SK-N-SH (cell line): ENCODE measurements at regions of chr1 and their contacts with region 1.

Region 1: DNA sequence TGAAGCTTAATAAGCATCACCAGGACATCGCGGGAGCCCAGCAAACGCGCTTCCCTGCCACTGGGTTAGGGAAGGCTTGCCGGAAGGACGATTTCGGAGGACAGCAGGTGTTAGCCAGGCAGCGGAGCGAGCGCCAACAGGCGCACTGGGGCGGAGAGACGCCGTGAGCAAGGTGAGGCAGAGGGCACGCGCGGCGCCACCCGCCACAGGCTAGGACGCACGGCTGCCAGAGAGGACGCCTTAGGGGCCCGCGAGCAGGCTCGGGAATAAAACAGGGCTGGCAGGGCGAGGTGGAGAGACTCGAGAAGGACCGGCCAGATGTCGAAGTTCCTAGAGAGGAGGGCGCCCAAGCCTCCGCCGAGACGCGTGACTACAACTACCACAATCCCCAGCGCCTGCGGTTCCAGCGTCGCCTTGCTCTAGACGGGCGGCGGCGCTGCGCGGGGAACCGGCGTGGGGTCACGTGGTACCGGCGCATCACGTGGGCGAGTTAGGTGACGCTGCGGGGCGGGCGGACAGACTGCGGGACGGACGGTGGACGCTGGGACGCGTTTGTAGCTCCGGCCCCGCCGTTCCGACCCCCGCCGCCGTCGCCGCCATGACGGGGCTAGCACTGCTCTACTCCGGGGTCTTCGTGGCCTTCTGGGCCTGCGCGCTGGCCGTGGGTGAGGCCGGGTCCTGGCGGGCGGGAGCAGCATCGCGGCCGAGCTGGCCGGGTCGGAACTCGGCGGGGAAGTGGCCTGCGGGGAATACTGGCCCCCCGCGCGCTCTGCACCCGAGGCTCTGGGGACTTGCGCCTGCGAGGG is at the start of gene ATP6V0B:
- DNase-seq: peak; percentile 96
- H3K4me3 ChIP-seq: peak within 1 kb of the TSS; percentile 83 to 91
- H3K27ac ChIP-seq: peak within 1 kb of the TSS; percentile 66 to 93; a peak in 3 of 4 replicates
- H3K4me1 ChIP-seq: peaks cover 8 to 47% of the 10 kb centered on the region in 2 experiments; a peak in 1 of 4 replicates
- H3K27me3 ChIP-seq: no peaks in the 10 kb centered on the region
- CTCF ChIP-seq: no peak
- EP300 ChIP-seq: no peak
- RAD21 ChIP-seq: no peak
- polyA plus RNA-seq, gene ATP6V0B: 180 and 191 TPM in 2 replicates

Region 2: GRCh38 chr1:43946236-43947060 is 28.2 kb before region 1 on chr1 and contains the start of gene IPO13:
- CTCF ChIA-PET with region 1: interaction called, 10 read pairs
- POLR2A ChIA-PET with region 1: interaction called, 3 read pairs
- DNase-seq: peak; percentile 98
- H3K4me3 ChIP-seq: peak within 1 kb of the TSS; percentile 79 to 93
- H3K27ac ChIP-seq: peak within 1 kb of the TSS; percentile 82 to 97
- H3K4me1 ChIP-seq: peaks cover 12 to 24% of the 10 kb centered on the region in 2 experiments
- H3K27me3 ChIP-seq: no peaks in the 10 kb centered on the region
- CTCF ChIP-seq: peak; percentile 68
- EP300 ChIP-seq: no peak
- RAD21 ChIP-seq: peak; percentile 59
- polyA plus RNA-seq, gene IPO13: 15.5 and 16.7 TPM in 2 replicates

Region 3: DNA sequence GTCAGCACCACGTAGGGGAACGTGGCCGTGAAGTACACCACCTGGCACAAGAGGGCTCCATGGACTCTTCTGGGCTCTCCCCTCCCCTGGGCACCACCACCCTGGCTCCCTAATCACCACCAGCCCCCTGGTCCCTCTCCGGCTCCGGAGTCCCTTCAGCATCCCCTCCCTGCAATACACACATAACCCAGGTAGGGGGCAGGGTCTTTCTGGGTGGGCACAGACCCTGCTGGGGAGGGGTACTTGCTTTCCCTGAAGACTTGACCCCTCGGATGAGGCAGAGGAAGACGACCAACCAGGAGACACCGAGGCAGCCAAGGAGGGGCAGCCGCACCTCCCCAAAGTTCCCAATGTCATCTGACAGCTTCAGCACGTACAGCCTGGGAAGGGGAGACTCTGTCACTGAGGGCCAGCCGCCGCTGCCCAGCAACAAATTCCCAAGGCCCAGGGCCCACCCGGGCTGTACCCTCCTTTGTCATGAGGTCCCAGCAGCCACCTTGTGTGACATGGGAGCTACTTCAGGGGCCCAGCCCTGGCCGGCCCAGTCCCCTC is 28.0 kb after region 1 on chr1:
- CTCF ChIA-PET with region 1: interaction called, 10 read pairs
- POLR2A ChIA-PET with region 1: interaction called, 3 read pairs
- DNase-seq: peak; percentile 59
- H3K4me3 ChIP-seq: no peak overlapping the region
- H3K27ac ChIP-seq: no peak overlapping the region
- H3K4me1 ChIP-seq: peaks cover 0 to 31% of the 10 kb centered on the region in 2 experiments; a peak in 2 of 4 replicates
- H3K27me3 ChIP-seq: no peaks in the 10 kb centered on the region
- CTCF ChIP-seq: peak; percentile 30
- EP300 ChIP-seq: no peak
- RAD21 ChIP-seq: no peak

Region 4: GRCh38 chr1:44036409-44037139 is 61.9 kb after region 1 on chr1:
- CTCF ChIA-PET with region 1: interaction called, 15 read pairs
- POLR2A ChIA-PET with region 1: no interaction called
- DNase-seq: peak; percentile 79
- H3K4me3 ChIP-seq: no peak overlapping the region; a peak in 1 of 4 replicates
- H3K27ac ChIP-seq: peak overlapping the region in 1 of 2 experiments; percentile 74; a peak in 2 of 4 replicates
- H3K4me1 ChIP-seq: peaks cover 14 to 35% of the 10 kb centered on the region in 2 experiments; a peak in 3 of 4 replicates
- H3K27me3 ChIP-seq: no peaks in the 10 kb centered on the region
- CTCF ChIP-seq: peak; percentile 85
- EP300 ChIP-seq: no peak
- RAD21 ChIP-seq: peak; percentile 89